ENCODE measurements at regions of chr11 and their contacts with region 1.

Region 1: GRCh38 chr11:120929664-120930154 is 94.2 kb upstream of the TBCEL start:
- H3K4me3 ChIP-seq: no peak overlapping the region
- H3K27ac ChIP-seq: no peak overlapping the region
- H3K4me1 ChIP-seq: no peaks in the 10 kb centered on the region
- CTCF ChIP-seq: peak; percentile 49; the same call in 1 of the 2 replicates

Region 2: GRCh38 chr11:120511116-120511819 is 418.4 kb before region 1 on chr11 and contains the start of gene GRIK4:
- CTCF ChIA-PET with region 1: interaction called, 12 read pairs
- POLR2A ChIA-PET with region 1: no interaction called
- H3K4me3 ChIP-seq: peak within 1 kb of the TSS; percentile 42
- H3K27ac ChIP-seq: peak within 1 kb of the TSS; percentile 53; the same call in 1 of the 2 replicates
- H3K4me1 ChIP-seq: no peaks in the 10 kb centered on the region
- CTCF ChIP-seq: peak; percentile 90

Region 3: DNA sequence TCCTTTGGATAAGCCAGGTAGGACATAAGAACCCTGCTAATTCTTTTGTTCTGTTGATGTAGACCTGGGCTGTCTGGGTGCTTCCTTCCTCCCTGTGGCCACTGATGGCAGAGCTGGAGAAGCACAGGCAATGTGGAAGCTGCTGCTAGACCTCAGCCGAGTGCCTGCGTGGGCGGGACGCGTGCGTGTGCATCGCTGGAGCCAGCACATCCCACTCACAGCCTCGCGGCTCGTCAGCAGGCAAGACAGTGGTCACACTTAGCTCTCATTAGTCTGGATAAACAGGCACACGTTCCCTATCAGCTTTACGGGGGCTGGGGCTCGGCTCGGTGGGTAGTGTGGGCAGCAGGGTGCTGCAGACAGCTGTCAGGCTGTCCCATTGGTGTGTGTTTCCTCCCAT is 262.4 kb before region 1 on chr11:
- CTCF ChIA-PET with region 1: no interaction called
- POLR2A ChIA-PET with region 1: no interaction called
- H3K4me3 ChIP-seq: no peak overlapping the region
- H3K27ac ChIP-seq: no peak overlapping the region
- H3K4me1 ChIP-seq: no peaks in the 10 kb centered on the region
- CTCF ChIP-seq: no peak

Region 4: DNA sequence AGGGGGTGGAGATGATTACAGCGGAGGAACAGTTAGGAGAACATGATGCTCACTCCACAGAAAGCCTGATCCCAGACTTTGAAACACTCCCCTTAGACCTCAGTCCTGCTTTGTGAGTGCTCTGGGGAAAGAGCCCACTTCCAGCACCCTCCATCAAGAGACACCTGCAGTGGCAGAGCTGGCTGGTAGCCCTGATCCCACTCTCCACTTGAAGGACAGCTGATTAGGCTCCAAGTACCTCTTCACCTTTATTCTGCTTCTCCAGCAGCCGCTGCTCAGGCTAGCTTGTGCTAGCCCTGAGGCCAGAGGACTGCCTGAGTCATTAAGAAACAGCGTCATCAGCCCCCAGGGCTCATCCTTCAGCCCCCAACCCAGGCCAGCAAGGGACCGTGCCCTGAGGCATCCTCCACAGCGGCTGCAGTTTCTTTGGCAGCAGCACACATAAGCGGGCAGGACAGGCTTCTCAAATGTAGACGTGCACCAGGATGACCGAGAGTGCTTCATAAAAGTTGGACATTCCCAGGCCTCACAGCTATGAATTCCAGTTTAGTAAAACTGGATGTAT is 51.9 kb before region 1 on chr11:
- CTCF ChIA-PET with region 1: no interaction called
- POLR2A ChIA-PET with region 1: no interaction called
- H3K4me3 ChIP-seq: no peak overlapping the region
- H3K27ac ChIP-seq: no peak overlapping the region
- H3K4me1 ChIP-seq: no peaks in the 10 kb centered on the region
- CTCF ChIP-seq: no peak

Region 5: GRCh38 chr11:120912504-120912903 is 17.2 kb before region 1 on chr11:
- CTCF ChIA-PET with region 1: interaction called, 21 read pairs
- POLR2A ChIA-PET with region 1: no interaction called
- H3K4me3 ChIP-seq: no peak overlapping the region
- H3K27ac ChIP-seq: no peak overlapping the region
- H3K4me1 ChIP-seq: no peaks in the 10 kb centered on the region
- CTCF ChIP-seq: peak; percentile 37; the same call in 1 of the 2 replicates

Region 6: DNA sequence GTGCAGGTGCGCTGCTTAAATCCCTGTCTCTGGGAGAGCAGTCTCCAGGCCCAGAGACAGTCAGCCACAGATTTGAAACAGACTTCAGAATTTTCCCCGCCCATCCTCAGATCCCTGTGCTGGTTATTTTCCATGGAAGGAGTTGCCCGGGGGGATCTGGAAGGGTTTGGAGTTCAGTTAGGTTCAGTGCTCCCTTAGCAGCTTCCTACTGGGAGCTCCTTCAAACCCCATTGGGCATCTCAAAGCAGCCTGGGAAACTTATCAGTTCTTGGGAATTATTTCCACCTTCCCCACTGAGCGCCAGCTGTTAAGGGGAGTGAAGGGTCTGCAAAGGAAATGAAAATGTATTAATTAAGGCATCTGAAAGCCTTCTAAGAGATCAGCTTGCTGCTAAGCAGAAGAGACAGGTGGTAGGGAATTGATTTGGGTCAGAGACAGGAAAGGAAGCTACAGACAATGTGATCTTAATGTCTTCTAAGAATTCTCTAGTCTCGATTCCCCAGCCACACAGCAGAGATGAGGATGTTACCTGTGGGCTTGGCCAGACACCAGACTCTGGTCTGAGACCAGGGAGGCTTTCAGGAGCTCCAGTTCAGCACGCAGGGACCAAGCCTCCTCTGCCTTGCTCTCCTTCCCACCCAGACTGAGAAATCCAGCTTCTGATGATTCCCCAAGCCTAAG is 12.0 kb before region 1 on chr11:
- CTCF ChIA-PET with region 1: interaction called, 21 read pairs
- POLR2A ChIA-PET with region 1: no interaction called
- H3K4me3 ChIP-seq: no peak overlapping the region
- H3K27ac ChIP-seq: no peak overlapping the region
- H3K4me1 ChIP-seq: no peaks in the 10 kb centered on the region
- CTCF ChIP-seq: no peak

Region 7: GRCh38 chr11:120945042-120945441 is 15.3 kb after region 1 on chr11:
- CTCF ChIA-PET with region 1: interaction called, 12 read pairs
- POLR2A ChIA-PET with region 1: no interaction called
- H3K4me3 ChIP-seq: no peak overlapping the region
- H3K27ac ChIP-seq: no peak overlapping the region
- H3K4me1 ChIP-seq: no peaks in the 10 kb centered on the region
- CTCF ChIP-seq: no peak

Region 8: GRCh38 chr11:121081320-121081719 is 151.6 kb after region 1 on chr11:
- CTCF ChIA-PET with region 1: no interaction called
- POLR2A ChIA-PET with region 1: no interaction called
- H3K4me3 ChIP-seq: no peak overlapping the region
- H3K27ac ChIP-seq: no peak overlapping the region
- H3K4me1 ChIP-seq: no peaks in the 10 kb centered on the region
- CTCF ChIP-seq: no peak

Region 9: GRCh38 chr11:121112498-121113455 is 183.1 kb after region 1 on chr11:
- CTCF ChIA-PET with region 1: interaction called, 11 read pairs
- POLR2A ChIA-PET with region 1: no interaction called
- H3K4me3 ChIP-seq: no peak overlapping the region
- H3K27ac ChIP-seq: no peak overlapping the region
- H3K4me1 ChIP-seq: no peaks in the 10 kb centered on the region
- CTCF ChIP-seq: no peak